ENCODE measurements at regions of chr5 and their contacts with region 1.

Region 1: GRCh38 chr5:19795218-19795617 is 192.8 kb downstream of the CDH18 start:
- DNase-seq: peak; percentile 62
- ATAC-seq: peak; percentile 64
- H3K4me3 ChIP-seq: no peak overlapping the region
- H3K27ac ChIP-seq: no peak overlapping the region
- H3K4me1 ChIP-seq: no peaks in the 10 kb centered on the region
- H3K27me3 ChIP-seq: no peaks in the 10 kb centered on the region
- CTCF ChIP-seq: peak; percentile 65

Region 2: DNA sequence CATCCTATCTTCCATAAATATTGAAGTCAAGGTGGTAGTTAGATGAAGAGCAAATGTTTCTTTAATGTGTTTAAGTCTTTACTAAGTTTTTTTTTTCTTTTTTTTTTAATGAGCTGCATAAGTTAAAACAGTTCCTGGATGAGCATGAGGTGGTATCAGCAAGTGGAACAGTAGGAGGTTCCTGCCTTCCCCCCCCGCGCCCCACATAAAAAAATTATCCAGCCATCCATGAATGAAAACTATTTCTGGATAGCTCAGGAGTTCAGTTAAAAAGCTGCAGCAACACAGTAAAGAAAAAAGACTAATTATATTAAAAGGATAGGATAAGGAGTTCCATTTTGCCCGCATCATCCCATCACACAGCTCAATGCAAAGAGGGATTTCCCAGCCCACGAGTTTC is 156.8 kb before region 1 on chr5:
- CTCF ChIA-PET with region 1: no interaction called
- POLR2A ChIA-PET with region 1: no interaction called
- intact Hi-C with region 1: no loop called
- DNase-seq: no peak
- ATAC-seq: no peak; the same call in 1 of the 2 replicates
- H3K4me3 ChIP-seq: peak overlapping the region; percentile 15; the same call in 1 of the 2 replicates
- H3K27ac ChIP-seq: no peak overlapping the region
- H3K4me1 ChIP-seq: no peaks in the 10 kb centered on the region
- H3K27me3 ChIP-seq: no peaks in the 10 kb centered on the region
- CTCF ChIP-seq: no peak

Region 3: GRCh38 chr5:19853616-19854240 is 58.5 kb after region 1 on chr5:
- CTCF ChIA-PET with region 1: no interaction called
- POLR2A ChIA-PET with region 1: no interaction called
- intact Hi-C with region 1: no loop called
- DNase-seq: peak; percentile 63
- ATAC-seq: no peak
- H3K4me3 ChIP-seq: no peak overlapping the region
- H3K27ac ChIP-seq: peak overlapping the region; percentile 52
- H3K4me1 ChIP-seq: peaks cover 19% of the 10 kb centered on the region; the same call in 1 of the 2 replicates
- H3K27me3 ChIP-seq: no peaks in the 10 kb centered on the region
- CTCF ChIP-seq: no peak

Region 4: DNA sequence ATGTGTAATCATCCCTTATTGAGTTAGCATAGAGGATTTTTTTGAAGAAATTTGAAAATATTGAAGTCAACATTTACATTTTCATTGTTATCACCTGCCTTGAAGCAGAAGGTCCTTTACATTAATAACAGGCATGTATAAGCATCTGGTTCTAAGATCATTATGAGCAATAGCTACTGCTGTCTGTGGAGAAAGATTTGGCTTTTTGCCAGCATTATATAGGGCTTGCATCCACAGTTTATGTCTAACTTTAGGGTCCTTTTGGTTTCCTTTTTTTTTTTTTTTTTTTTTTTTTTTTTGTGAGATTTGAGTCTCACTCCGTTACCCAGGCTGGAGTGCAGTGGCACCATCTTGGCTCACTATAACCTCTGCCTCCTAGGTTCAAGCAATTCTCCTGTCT is 260.5 kb after region 1 on chr5:
- CTCF ChIA-PET with region 1: interaction called, 3 read pairs
- POLR2A ChIA-PET with region 1: no interaction called
- intact Hi-C with region 1: loop called (anchors 5 kb)
- DNase-seq: no peak
- ATAC-seq: no peak
- H3K4me3 ChIP-seq: no peak overlapping the region
- H3K27ac ChIP-seq: no peak overlapping the region
- H3K4me1 ChIP-seq: peaks cover 11% of the 10 kb centered on the region
- H3K27me3 ChIP-seq: no peaks in the 10 kb centered on the region
- CTCF ChIP-seq: no peak

Region 5: GRCh38 chr5:20231040-20231439 is 435.8 kb after region 1 on chr5:
- CTCF ChIA-PET with region 1: no interaction called
- POLR2A ChIA-PET with region 1: no interaction called
- intact Hi-C with region 1: loop called (anchors 2 kb)
- DNase-seq: peak; percentile 10
- ATAC-seq: no peak
- H3K4me3 ChIP-seq: no peak overlapping the region
- H3K27ac ChIP-seq: no peak overlapping the region
- H3K4me1 ChIP-seq: no peaks in the 10 kb centered on the region
- H3K27me3 ChIP-seq: no peaks in the 10 kb centered on the region
- CTCF ChIP-seq: peak; percentile 42; the same call in 1 of the 2 replicates